Esophagus muscularis mucosa (tissue), 4 donors: ENCODE measurements at regions of chr11 and their contacts with region 1.

Region 1: GRCh38 chr11:19553683-19554333 is 158.8 kb upstream of the NAV2 start:
- DNase-seq: peak; percentile 96
- H3K4me3 ChIP-seq: no peak overlapping the region
- H3K27ac ChIP-seq: no peak overlapping the region
- H3K4me1 ChIP-seq: peaks cover 0 to 18% (median 13%) of the 10 kb centered on the region in 4 donors
- H3K27me3 ChIP-seq: peaks cover 0 to 9% (median 0%) of the 10 kb centered on the region in 4 donors
- CTCF ChIP-seq: peak; percentile 78 to 88 (median 88)
- EP300 ChIP-seq: no peak
- POLR2A ChIP-seq: no peak

Region 2: DNA sequence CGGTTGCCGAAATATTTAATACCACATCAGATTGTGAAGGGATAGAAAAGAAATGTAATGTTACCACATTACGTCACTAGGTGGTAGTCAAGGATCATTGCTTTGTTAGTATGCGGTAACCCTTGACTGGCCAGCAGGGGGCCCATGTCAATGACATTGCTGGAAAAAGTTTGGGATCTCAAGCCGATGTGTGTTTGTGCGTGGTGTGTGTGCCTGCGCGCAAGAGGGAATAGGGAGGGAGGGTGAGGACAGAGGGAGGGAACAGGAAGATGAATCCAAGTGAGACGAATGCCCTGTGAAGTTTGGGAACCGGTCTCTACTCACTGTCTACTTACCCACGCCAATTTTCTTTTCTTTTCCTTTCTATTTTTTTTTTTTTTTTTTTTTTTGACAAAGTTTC is 482.6 kb before region 1 on chr11:
- intact Hi-C with region 1: loop called (anchors 5 kb)
- DNase-seq: no peak
- H3K4me3 ChIP-seq: peak overlapping the region in 2 of 4 donors; percentile 11 to 29
- H3K27ac ChIP-seq: no peak overlapping the region
- H3K4me1 ChIP-seq: peaks cover 0 to 8% (median 3%) of the 10 kb centered on the region in 4 donors
- H3K27me3 ChIP-seq: peaks cover 0 to 14% (median 0%) of the 10 kb centered on the region in 4 donors
- CTCF ChIP-seq: peak; percentile 69 to 82 (median 76)
- EP300 ChIP-seq: no peak
- POLR2A ChIP-seq: no peak

Region 3: GRCh38 chr11:19259487-19260345 is 294.1 kb before region 1 on chr11:
- intact Hi-C with region 1: loop called (anchors 5 kb)
- DNase-seq: peak; percentile 89
- H3K4me3 ChIP-seq: peak overlapping the region in 2 of 4 donors; percentile 21 to 33
- H3K27ac ChIP-seq: no peak overlapping the region
- H3K4me1 ChIP-seq: peaks cover 0 to 3% (median 0%) of the 10 kb centered on the region in 4 donors
- H3K27me3 ChIP-seq: no peaks in the 10 kb centered on the region
- CTCF ChIP-seq: peak; percentile 85 to 97 (median 89)
- EP300 ChIP-seq: no peak
- POLR2A ChIP-seq: no peak

Region 4: DNA sequence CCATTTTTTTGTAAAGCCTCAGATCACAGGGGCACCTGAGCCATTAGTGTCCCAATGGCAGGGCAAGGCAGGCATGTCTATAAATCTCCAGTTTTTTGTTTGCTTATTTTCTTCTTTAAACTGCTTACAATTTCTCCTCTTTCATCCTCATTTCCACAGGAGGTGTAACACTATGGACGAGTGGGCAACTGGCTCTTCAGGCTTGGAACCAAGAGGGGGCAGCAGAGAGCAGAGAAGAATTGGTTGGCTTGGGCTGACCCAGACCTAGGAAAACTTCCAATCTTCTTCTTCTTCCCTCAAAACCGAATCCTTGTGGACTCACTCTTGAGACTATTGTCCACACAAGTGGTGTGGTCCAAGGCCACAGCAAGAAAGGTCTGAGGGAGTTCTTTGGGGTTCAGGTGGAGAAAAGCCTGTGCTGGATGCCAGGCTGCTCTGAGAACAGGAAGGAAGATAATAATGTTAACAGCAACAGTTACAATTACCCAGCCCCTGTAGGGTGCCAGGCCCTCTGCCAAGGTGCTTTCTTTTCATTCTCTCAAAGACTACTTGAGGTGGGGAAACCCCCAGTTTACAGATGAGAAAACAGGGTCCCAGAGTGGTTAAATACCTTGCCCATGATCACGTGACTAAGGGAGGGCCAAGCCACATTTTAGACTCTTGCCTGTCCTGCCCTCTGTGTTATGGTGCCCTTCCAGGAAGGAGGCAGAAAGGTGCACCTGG is 242.3 kb before region 1 on chr11:
- intact Hi-C with region 1: loop called (anchors 1 kb)
- DNase-seq: no peak
- H3K4me3 ChIP-seq: no peak overlapping the region
- H3K27ac ChIP-seq: no peak overlapping the region
- H3K4me1 ChIP-seq: peaks cover 0 to 6% (median 5%) of the 10 kb centered on the region in 4 donors
- H3K27me3 ChIP-seq: peaks cover 0 to 10% (median 0%) of the 10 kb centered on the region in 4 donors
- CTCF ChIP-seq: peak; percentile 73 to 79 (median 79)
- EP300 ChIP-seq: no peak
- POLR2A ChIP-seq: no peak

Region 5: DNA sequence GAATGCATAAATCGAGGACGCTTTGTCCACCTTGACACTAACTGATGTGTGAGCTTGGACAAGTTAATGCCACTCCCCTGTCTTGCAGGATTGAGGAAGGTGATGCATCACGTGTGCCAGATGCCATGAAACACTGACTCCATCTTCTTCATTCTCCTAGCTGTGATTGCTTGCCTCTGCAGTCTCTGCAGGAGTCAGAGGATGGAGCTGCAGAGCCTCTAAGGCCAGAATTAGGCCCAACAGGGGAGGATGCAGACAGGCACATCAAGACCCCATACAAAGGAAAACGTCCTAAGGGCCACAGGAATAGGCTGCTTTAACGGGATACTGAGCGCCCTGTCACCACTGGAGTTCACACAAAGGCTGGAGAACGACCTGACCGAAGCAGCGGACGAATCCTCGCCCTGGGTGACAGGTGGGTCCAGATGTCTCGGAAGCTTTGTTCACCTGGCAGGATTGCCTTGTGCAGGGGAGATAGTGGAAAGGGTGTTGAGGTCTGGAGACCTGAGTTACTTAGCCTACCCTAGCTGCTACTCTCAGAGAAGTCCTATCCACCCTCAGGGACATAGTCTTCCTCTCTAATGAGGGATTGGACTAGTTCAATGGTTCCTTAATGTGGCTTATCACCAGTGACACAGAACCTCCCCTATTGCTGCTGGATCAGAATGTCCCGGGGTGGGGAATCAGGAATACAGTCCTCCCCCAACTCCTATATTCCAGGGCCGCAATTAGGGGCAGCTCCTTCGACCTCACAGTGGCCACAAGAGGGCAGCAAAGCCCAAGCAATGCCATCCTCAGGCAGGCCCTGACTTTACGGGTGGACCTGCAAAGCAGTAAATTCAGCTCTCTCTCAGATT is 574.1 kb after region 1 on chr11:
- intact Hi-C with region 1: loop called (anchors 5 kb)
- DNase-seq: no peak
- H3K4me3 ChIP-seq: no peak overlapping the region
- H3K27ac ChIP-seq: no peak overlapping the region
- H3K4me1 ChIP-seq: peaks cover 8 to 14% (median 12%) of the 10 kb centered on the region in 4 donors
- H3K27me3 ChIP-seq: no peaks in the 10 kb centered on the region
- CTCF ChIP-seq: peak; percentile 76 to 91 (median 80)
- EP300 ChIP-seq: no peak
- POLR2A ChIP-seq: no peak